ENCODE measurements at regions of chr7 and their contacts with region 1.

Region 1: GRCh38 chr7:17965603-17966002 is 25.3 kb upstream of the SNX13 start:
- DNase-seq: no peak
- ATAC-seq: no peak
- H3K4me3 ChIP-seq: no peak overlapping the region
- H3K27ac ChIP-seq: no peak overlapping the region
- H3K4me1 ChIP-seq: no peaks in the 10 kb centered on the region
- H3K27me3 ChIP-seq: no peaks in the 10 kb centered on the region
- CTCF ChIP-seq: no peak

Region 2: GRCh38 chr7:17769918-17770317 is 195.7 kb before region 1 on chr7:
- intact Hi-C with region 1: loop called in 2 of 10 experiments (anchors 10 kb)
- DNase-seq: peak in 1 of 2 donors; percentile 58
- ATAC-seq: peak in 6 of 8 donors; percentile 47 to 71 (median 64)
- H3K4me3 ChIP-seq: no peak overlapping the region
- H3K27ac ChIP-seq: no peak overlapping the region
- H3K4me1 ChIP-seq: peaks cover 5 to 42% (median 13%) of the 10 kb centered on the region in 9 donors
- H3K27me3 ChIP-seq: no peaks in the 10 kb centered on the region
- CTCF ChIP-seq: peak; percentile 25 to 79 (median 72)

Measured in heart right ventricle (tissue), 16 donors.